ENCODE measurements at regions of chr12 and their contacts with region 1.

Region 1: DNA sequence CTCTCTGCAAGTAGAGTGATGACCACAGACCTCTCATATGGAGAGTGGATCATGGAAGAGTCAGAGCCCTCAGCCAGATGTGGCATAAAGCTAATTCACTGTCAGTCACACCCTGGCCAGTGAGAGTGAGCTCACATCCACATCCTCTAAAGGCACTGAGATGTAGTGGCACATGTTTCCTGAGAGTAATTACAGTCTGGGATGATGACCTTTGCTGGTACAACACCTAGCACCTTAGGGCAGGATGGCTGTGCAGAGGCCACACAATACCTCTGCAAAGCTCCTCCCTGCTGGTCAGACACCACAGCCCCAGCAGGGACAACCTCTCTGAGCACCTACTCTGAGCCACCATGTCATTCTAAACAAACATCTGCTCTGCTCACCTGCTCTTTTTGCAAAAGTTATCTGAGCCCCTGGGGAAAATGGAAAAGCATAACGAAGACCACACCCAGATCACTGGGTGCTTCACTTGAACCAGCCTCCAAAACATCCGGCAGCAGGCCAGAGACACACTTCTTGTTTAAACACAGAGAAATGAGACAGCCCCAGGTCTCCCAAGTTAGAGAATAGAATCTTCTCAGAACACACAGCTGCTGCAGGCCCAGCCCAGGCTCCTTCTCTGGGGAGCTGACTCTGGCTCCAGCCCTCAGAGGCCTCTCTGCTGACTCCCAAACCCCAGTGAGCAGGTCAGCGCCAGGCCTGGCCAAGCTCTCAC is 30.3 kb downstream of the PITPNM2 start:
- DNase-seq: peak; percentile 15
- H3K4me3 Mint-ChIP-seq: no peak overlapping the region
- H3K27ac Mint-ChIP-seq: peak overlapping the region; percentile 73
- H3K4me1 Mint-ChIP-seq: peaks cover 39% of the 10 kb centered on the region
- H3K27me3 Mint-ChIP-seq: no peaks in the 10 kb centered on the region

Region 2: GRCh38 chr12:122610876-122611275 is 509.7 kb before region 1 on chr12:
- intact Hi-C with region 1: no loop called
- DNase-seq: no peak
- H3K4me3 Mint-ChIP-seq: no peak overlapping the region
- H3K27ac Mint-ChIP-seq: no peak overlapping the region
- H3K4me1 Mint-ChIP-seq: no peaks in the 10 kb centered on the region
- H3K27me3 Mint-ChIP-seq: no peaks in the 10 kb centered on the region

Region 3: GRCh38 chr12:123106628-123107359 is 13.8 kb before region 1 on chr12:
- intact Hi-C with region 1: loop called (anchors 2 kb)
- DNase-seq: peak; percentile 71
- H3K4me3 Mint-ChIP-seq: peak overlapping the region; percentile 22
- H3K27ac Mint-ChIP-seq: peak overlapping the region; percentile 96
- H3K4me1 Mint-ChIP-seq: peaks cover 41% of the 10 kb centered on the region
- H3K27me3 Mint-ChIP-seq: no peaks in the 10 kb centered on the region